HEK293T (cell line): ENCODE measurements at regions of chr7 and their contacts with region 1.

Region 1: GRCh38 chr7:135645296-135645904 is 16.9 kb upstream of the STMP1 start:
- DNase-seq: peak; percentile 61

Region 2: DNA sequence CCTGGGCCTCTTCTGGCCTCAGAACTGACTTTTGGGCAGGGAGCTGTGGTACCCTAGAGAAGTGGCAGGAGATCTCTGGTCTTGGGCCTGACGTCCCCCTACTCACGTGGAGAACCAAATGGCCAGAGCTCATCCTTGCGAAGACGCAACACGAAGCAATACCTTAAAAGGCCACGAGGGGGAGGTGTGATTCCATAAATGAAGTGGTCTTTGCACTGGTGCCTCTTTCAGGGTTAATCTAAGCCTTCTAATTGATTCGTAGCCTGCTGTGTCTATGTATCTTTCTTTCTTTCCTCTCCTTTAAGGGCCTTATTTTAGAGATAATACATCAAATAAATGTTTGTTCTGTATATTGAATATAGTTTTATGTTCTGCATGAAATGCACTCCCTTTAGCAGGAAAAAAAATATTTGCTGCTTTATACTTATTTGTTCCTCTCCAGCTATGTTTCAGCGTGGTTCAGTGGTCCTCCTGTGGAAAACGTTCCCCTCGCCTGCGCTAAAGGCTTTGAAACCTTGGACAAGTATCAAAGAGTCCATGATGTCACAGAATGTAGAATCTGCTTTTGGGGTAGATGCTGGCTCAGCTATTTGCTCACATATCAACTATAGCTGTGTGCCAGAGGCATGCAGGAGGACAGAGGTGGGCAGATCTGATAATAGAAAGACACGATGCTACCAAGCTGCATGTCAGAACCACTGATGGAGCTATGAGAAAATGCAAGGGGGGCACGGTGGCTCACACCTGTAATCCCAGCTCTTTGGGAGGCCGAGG is 370.7 kb before region 1 on chr7:
- CTCF ChIA-PET with region 1: interaction called, 14 read pairs
- POLR2A ChIA-PET with region 1: no interaction called
- DNase-seq: peak; percentile 88

Region 3: GRCh38 chr7:135281363-135281949 is 363.9 kb before region 1 on chr7:
- CTCF ChIA-PET with region 1: interaction called, 14 read pairs
- POLR2A ChIA-PET with region 1: no interaction called
- DNase-seq: peak; percentile 91

Region 4: DNA sequence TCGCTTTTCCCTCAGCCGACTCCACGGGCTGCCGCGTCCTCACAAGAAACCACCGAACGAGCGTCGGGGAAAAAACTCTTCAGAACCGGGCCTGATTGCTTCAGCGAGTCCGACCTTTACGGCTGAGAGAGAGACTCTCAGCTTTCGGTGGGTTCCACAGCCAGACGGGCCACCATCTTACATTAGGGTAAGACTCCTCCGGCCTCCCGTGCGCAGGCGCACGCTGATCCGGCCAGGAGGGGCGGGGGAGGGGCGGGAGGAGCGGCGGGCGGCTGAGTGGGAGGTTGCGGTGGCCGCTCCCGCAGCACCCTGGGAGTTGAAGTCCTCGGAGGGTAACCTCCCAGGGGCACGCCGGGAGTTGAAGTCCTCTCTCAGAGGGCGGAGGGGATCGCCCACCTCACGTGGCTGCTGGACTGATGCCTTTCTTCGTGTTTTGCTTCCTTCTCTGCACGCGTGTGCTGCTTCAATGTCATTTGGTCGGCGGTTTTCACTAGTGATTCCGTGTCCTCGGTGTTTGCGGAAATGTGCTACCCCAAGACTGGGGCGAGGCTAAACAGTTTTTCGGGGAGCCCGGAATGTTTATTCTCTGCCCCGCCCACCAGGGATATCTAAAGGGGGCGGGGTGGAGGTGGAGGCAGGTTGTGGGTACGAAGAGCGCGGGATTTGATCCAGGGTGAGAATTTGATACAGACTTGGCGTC is 135.3 kb before region 1 on chr7 and contains the start of gene CNOT4:
- CTCF ChIA-PET with region 1: no interaction called
- POLR2A ChIA-PET with region 1: no interaction called
- DNase-seq: peak; percentile 99

Region 5: DNA sequence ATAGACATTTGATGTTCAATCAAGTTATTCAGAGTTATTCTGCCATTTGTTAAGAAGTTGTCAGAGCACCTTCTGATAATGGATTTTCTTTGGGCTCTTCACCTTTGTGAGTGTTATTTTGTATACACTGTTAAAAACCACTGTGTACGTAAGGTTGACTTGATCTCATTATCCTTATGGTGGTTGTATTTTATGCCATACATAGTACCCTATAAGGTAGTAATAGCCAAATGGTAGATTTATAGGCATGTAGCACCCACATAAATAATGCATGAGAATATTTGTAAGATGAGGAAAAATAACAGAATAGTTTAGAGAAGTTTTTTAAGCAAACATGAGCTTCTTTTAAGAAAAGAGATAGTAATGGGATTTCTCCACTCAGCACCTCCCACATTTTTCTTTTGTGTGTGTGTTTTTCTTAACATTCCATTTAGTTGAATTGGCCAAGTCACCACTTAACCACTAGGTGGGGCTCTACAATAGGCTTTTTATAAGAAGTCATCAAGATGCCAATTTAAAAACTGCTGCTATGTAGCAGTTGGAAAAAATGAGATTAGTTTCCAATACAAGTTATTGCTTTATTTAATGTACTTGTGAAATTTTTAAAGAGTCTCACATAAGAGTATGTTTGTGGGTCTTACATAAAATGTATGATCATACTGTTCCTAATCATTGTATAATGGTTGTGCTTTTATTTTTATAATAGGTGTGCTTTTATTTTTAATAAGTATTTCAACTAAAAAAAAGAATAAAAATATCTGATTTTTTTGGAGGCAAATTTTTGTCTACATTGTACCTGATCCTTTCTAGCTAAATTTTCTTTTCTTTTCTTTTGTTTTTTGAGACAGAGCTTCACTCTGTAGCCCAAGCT is 24.2 kb before region 1 on chr7:
- CTCF ChIA-PET with region 1: interaction called, 10 read pairs
- POLR2A ChIA-PET with region 1: no interaction called
- DNase-seq: peak; percentile 59